ENCODE measurements at regions of chr1 and their contacts with region 1.

Region 1: GRCh38 chr1:200409761-200410565 is at the start of gene ZNF281:
- DNase-seq: peak; percentile 90
- H3K4me3 ChIP-seq: peak within 1 kb of the TSS; percentile 91 to 98 (median 94)
- H3K27ac ChIP-seq: peak within 1 kb of the TSS; percentile 78
- H3K4me1 ChIP-seq: peaks cover 46% of the 10 kb centered on the region
- H3K27me3 ChIP-seq: no peaks in the 10 kb centered on the region
- CTCF ChIP-seq: no peak
- total RNA-seq, gene ZNF281: 27.5 to 42.2 TPM

Region 2: DNA sequence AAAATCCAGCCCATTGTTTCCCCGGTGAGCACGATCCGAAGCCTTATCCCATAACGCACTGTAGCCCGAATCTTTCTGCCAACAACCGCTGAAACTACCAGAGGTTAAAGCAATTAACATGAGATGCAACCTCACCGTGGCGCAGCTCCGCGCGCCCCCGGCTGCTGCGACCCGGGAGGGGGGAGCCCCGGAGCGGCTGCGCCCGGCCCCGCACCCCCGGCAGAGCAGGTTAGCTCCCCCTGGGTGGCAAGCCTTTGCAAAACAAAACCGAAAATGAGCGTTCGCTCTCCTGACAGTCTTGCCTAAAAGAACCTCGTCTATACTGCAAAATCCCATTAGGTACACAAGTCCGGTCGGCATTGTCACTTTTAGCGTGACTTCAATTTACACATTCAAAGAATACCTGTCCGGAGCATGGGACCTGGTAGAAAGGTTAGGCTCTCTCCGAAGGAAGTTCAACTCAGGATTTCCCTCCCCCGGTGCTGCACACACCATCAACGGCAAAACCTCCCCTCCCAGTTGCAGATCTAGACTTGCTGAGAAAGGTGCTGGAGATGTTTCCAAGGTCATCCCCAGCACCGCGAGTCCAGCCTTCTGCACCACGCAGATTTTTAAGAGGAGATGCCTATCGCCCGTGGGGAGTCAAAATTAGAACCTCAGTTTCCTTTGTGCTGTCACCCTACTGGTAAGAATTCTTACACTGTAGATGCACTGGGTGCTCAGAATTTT is 107.6 kb before region 1 on chr1:
- CTCF ChIA-PET with region 1: no interaction called
- dilution Hi-C with region 1: no loop called
- in situ Hi-C with region 1: no loop called
- intact Hi-C with region 1: loop called (anchors 5 kb)
- DNase-seq: peak; percentile 34
- H3K4me3 ChIP-seq: peak overlapping the region; percentile 55 to 69 (median 59)
- H3K27ac ChIP-seq: no peak overlapping the region
- H3K4me1 ChIP-seq: peaks cover 2% of the 10 kb centered on the region
- H3K27me3 ChIP-seq: no peaks in the 10 kb centered on the region
- CTCF ChIP-seq: peak in 1 of 2 donors; percentile 20

Region 3: DNA sequence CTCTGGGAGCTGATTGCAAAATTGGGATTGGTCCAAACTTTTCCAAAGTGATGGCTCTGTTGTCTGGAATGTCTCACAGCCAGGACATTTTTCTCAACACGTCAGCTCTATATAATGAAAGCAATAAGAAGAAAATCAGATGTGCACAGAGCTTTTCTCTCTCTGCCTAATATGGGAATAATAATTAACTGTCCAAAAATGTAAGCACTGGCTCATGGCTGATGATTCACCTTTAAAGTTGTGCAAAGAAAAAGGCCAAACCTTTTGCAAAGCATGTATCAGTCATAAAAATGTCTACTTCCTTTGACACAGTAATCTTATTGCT is 30.6 kb before region 1 on chr1:
- CTCF ChIA-PET with region 1: no interaction called
- dilution Hi-C with region 1: no loop called
- in situ Hi-C with region 1: no loop called
- intact Hi-C with region 1: loop called (anchors 2 kb)
- DNase-seq: peak; percentile 88
- H3K4me3 ChIP-seq: no peak overlapping the region
- H3K27ac ChIP-seq: peak overlapping the region; percentile 58
- H3K4me1 ChIP-seq: peaks cover 59% of the 10 kb centered on the region
- H3K27me3 ChIP-seq: no peaks in the 10 kb centered on the region
- CTCF ChIP-seq: no peak

Region 4: DNA sequence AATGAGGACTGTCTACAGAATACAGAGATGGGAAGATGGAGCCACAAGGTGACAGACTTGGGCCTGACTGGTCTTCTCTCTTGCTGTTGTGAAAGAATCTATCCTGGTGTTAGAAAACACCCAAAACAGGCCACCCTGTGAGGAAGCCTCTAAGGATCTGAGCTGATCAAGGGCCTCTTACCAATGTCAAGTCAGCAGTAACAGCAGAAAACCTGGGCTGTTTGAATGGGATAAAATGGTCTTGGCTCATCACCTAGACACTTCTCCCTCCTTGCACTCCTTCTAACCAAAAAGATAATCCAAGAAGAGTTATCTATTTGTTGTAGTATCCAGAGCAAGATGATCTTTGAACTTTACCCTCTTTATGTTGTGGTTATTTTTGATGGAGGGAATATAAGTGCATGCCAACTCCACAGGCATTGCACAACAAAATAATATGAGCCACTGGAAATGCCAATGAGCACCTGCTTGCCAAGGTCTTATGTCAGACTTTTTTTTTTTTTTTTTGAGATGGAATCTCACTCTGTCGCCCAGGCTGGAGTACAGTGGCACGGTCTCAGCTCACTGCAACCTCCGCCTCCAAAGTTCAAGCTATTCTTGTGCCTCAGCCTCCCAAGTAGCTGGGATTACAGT is 32.7 kb after region 1 on chr1:
- CTCF ChIA-PET with region 1: no interaction called
- dilution Hi-C with region 1: no loop called
- in situ Hi-C with region 1: no loop called
- intact Hi-C with region 1: loop called (anchors 2 kb)
- DNase-seq: peak; percentile 77
- H3K4me3 ChIP-seq: no peak overlapping the region
- H3K27ac ChIP-seq: peak overlapping the region; percentile 39
- H3K4me1 ChIP-seq: peaks cover 19% of the 10 kb centered on the region
- H3K27me3 ChIP-seq: no peaks in the 10 kb centered on the region
- CTCF ChIP-seq: no peak

Region 5: DNA sequence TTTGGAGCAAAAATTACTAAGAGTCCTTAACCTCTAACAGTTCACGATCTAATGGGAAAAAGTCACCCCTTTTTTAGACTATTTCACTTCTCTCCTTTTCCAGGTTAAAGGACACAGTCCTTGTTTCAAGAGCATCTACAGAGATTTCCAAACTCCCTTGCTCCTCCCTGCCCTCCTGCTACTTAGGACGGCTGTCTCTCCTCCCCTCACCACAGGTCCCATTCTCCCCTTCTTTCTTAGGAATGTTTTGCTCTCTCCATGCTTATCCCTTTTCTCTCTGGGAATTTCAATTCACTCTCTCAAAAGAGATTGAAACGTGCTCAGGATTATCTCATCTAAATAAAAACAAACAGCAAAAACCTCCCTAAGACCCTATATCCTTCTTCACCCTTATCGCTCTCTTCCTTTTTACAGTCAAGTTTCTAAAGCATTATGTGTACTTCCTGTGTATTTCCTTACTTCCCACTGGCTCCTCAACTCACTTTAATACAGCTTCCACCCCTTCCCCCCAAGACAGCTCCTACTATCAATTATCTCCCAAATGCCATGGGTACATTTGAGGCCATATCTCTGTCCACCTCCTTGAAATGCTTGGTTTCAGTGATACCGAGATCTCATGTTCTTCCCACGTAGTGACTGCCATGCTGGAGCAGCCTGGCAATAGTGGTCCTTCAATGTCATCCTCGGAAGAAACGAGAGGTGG is 43.0 kb after region 1 on chr1:
- CTCF ChIA-PET with region 1: no interaction called
- dilution Hi-C with region 1: no loop called
- in situ Hi-C with region 1: no loop called
- intact Hi-C with region 1: no loop called
- DNase-seq: no peak
- H3K4me3 ChIP-seq: no peak overlapping the region
- H3K27ac ChIP-seq: no peak overlapping the region
- H3K4me1 ChIP-seq: no peaks in the 10 kb centered on the region
- H3K27me3 ChIP-seq: no peaks in the 10 kb centered on the region
- CTCF ChIP-seq: no peak

Region 6: DNA sequence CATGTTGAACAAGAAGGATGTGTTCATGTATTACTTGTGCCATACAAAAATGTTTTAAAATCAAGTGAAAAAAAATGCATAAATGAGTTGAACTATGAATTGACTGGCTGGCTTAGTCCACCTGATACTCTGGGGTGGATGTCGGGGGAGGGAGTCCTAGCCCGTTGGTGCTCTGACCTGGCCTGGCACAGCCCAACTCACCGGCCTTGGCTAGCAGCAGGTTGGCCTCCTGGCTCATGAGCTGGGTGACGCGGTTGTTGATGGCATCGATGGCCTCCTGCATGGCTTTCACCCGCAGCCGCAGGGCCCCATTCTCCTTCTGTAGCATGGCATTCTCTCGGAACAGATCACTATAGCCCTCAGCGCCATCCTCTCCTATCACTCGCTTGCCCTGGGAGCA is 592.0 kb after region 1 on chr1:
- CTCF ChIA-PET with region 1: no interaction called
- dilution Hi-C with region 1: no loop called
- in situ Hi-C with region 1: no loop called
- intact Hi-C with region 1: no loop called
- DNase-seq: no peak
- H3K4me3 ChIP-seq: no peak overlapping the region
- H3K27ac ChIP-seq: no peak overlapping the region
- H3K4me1 ChIP-seq: no peaks in the 10 kb centered on the region
- H3K27me3 ChIP-seq: no peaks in the 10 kb centered on the region
- CTCF ChIP-seq: no peak